Activated CD4-positive, alpha-beta T cell treated with anti-CD3 and anti-CD28 coated beads for 36 hours (primary cell): ENCODE measurements at regions of chr7 and their contacts with region 1.

Region 1: DNA sequence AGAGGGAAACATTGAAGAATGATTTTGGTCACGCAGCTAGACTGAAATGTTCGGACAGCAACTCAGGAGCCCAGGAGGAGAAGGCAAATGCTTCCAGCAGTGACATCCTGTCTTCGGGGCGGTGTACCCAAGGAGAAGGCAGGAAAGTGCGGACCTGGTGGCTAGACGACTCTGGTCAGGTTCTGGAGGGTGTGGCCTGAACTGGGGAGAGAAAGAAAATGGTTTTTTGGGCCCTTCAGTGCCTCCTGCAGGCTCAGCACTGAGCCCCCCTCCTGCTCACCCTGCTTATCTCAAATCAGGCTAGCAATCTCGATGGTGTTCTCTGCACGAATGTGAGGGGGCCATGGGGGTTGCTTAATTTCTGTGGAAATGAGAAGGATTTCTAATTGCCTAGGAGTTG is 26.7 kb upstream of the TARP start:
- DNase-seq: peak; percentile 15
- ATAC-seq: peak; percentile 55
- H3K4me3 Mint-ChIP-seq: peak overlapping the region; percentile 70
- H3K27ac Mint-ChIP-seq: peak overlapping the region; percentile 69
- H3K4me1 Mint-ChIP-seq: peaks cover 4% of the 10 kb centered on the region
- H3K27me3 Mint-ChIP-seq: no peaks in the 10 kb centered on the region

Region 2: GRCh38 chr7:38257350-38257677 is 42.9 kb before region 1 on chr7:
- CTCF ChIA-PET with region 1: no interaction called
- POLR2A ChIA-PET with region 1: no interaction called
- intact Hi-C with region 1: loop called in 1 of 2 experiments (anchors 1 kb)
- DNase-seq: no peak
- ATAC-seq: no peak
- H3K4me3 Mint-ChIP-seq: no peak overlapping the region
- H3K27ac Mint-ChIP-seq: no peak overlapping the region
- H3K4me1 Mint-ChIP-seq: no peaks in the 10 kb centered on the region
- H3K27me3 Mint-ChIP-seq: no peaks in the 10 kb centered on the region

Region 3: DNA sequence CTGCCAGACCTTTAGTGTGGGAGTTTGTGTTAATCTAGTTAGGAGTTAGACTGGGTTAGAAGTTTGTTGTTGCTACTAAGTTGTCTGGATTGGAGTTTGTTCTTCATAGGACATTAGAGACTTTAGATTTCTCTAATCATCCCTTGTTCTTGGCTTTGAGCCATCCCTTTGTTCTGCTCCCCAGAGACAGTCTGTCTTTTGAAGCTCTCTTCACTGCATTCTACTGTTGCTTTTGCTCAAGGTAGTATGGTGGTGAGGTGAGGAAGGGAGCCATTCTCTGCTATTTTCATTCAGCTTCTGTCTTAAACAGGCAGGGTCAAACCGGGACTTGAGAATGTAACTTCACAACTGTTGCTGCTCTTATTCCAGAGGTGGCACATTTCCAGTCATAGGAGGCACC is 16.4 kb before region 1 on chr7:
- CTCF ChIA-PET with region 1: no interaction called
- POLR2A ChIA-PET with region 1: no interaction called
- intact Hi-C with region 1: no loop called
- DNase-seq: no peak
- ATAC-seq: no peak
- H3K4me3 Mint-ChIP-seq: no peak overlapping the region
- H3K27ac Mint-ChIP-seq: no peak overlapping the region
- H3K4me1 Mint-ChIP-seq: no peaks in the 10 kb centered on the region
- H3K27me3 Mint-ChIP-seq: no peaks in the 10 kb centered on the region

Region 4: GRCh38 chr7:39099146-39099545 is 799.0 kb after region 1 on chr7:
- CTCF ChIA-PET with region 1: no interaction called
- POLR2A ChIA-PET with region 1: no interaction called
- intact Hi-C with region 1: no loop called
- DNase-seq: no peak
- ATAC-seq: no peak
- H3K4me3 Mint-ChIP-seq: no peak overlapping the region
- H3K27ac Mint-ChIP-seq: no peak overlapping the region
- H3K4me1 Mint-ChIP-seq: no peaks in the 10 kb centered on the region
- H3K27me3 Mint-ChIP-seq: peaks cover 4% of the 10 kb centered on the region